ENCODE measurements at regions of chr10 and their contacts with region 1.

Region 1: GRCh38 chr10:19922236-19922963 is 106.2 kb downstream of the PLXDC2 start:
- DNase-seq: no peak
- ATAC-seq: peak; percentile 79
- H3K4me3 ChIP-seq: no peak overlapping the region
- H3K27ac ChIP-seq: peak overlapping the region; percentile 78 to 86
- H3K4me1 ChIP-seq: peaks cover 3 to 20% of the 10 kb centered on the region in 2 donors
- H3K27me3 ChIP-seq: no peaks in the 10 kb centered on the region

Region 2: GRCh38 chr10:19654576-19654975 is 267.8 kb before region 1 on chr10:
- intact Hi-C with region 1: loop called in 1 of 2 experiments (anchors 10 kb)
- DNase-seq: no peak
- ATAC-seq: no peak
- H3K4me3 ChIP-seq: no peak overlapping the region
- H3K27ac ChIP-seq: no peak overlapping the region
- H3K4me1 ChIP-seq: peaks cover 0 to 5% of the 10 kb centered on the region in 2 donors
- H3K27me3 ChIP-seq: no peaks in the 10 kb centered on the region

Region 3: GRCh38 chr10:20381761-20382160 is 459.4 kb after region 1 on chr10:
- intact Hi-C with region 1: no loop called
- DNase-seq: no peak
- ATAC-seq: no peak
- H3K4me3 ChIP-seq: no peak overlapping the region
- H3K27ac ChIP-seq: no peak overlapping the region
- H3K4me1 ChIP-seq: no peaks in the 10 kb centered on the region
- H3K27me3 ChIP-seq: no peaks in the 10 kb centered on the region

Region 4: GRCh38 chr10:20768843-20769242 is 846.4 kb after region 1 on chr10:
- intact Hi-C with region 1: loop called in 1 of 2 experiments (anchors 10 kb)
- DNase-seq: no peak
- ATAC-seq: no peak
- H3K4me3 ChIP-seq: no peak overlapping the region
- H3K27ac ChIP-seq: no peak overlapping the region
- H3K4me1 ChIP-seq: no peaks in the 10 kb centered on the region
- H3K27me3 ChIP-seq: no peaks in the 10 kb centered on the region

Measured in aorta (tissue), 5 donors.